ENCODE measurements at regions of chr6 and their contacts with region 1.

Region 1: DNA sequence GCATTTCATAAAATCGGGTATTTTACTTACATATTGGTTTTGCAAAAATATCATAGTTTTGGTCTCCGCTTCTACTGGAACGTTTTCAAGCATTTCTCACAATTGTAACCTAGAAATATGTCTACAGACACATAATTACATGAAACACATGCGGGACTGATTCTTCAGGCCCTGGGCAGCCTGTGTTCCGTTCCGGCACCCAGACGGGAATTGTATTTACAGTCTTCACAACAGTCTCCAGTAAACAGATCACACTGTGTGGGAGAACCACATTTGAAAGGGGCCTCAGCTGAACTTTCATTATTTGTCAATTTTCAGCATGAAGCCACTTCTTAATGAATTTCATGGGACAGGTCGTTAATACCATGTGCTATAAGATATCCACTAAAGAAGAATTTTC is 196.9 kb downstream of the DST start:
- DNase-seq: peak in 1 of 5 donors; percentile 46
- H3K4me3 ChIP-seq: no peak overlapping the region
- H3K27ac ChIP-seq: peak overlapping the region in 1 of 2 donors; percentile 5
- H3K4me1 ChIP-seq: peaks cover 8% of the 10 kb centered on the region
- H3K27me3 ChIP-seq: no peaks in the 10 kb centered on the region
- CTCF ChIP-seq: no peak
- EP300 ChIP-seq: no peak
- POLR2A ChIP-seq: no peak

Region 2: DNA sequence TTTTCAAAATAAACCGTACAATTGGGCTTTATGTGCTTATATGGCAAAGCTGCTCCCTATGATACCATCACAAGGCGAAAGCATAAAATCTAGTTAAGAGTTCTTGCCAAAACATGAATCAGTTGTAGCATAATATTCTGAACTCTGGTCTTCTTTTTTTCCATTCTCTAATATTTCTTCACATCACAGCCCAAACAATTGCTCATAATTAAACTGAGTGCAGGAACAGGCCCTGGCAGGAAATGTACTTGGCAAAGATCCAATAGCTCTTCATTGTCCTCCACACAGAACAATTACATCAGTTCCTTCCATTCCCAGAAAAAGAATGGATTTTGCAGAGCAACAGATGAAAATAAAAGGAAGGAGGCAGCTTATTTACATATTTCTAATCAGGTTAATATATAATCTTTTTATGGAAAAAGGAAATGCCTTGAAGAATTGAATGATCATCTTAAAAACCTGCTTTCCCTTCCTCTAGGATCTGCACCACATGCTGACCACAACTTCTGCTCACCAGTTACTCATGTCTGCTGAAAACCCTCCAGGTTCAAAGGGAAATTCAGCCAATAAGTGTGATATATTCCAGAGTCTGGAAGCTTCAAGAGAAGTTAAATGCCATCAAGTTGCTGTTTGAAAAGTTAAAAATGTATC is 75.1 kb before region 1 on chr6:
- intact Hi-C with region 1: loop called in 1 of 4 experiments (anchors 10 kb)
- DNase-seq: peak in 4 of 5 donors; percentile 40 to 78 (median 53)
- H3K4me3 ChIP-seq: no peak overlapping the region
- H3K27ac ChIP-seq: peak overlapping the region in 1 of 2 donors; percentile 48
- H3K4me1 ChIP-seq: peaks cover 13% of the 10 kb centered on the region
- H3K27me3 ChIP-seq: no peaks in the 10 kb centered on the region
- CTCF ChIP-seq: no peak
- EP300 ChIP-seq: peak; percentile 20
- POLR2A ChIP-seq: no peak

Measured in ovary (tissue), 10 donors.